ENCODE measurements at regions of chr18 and their contacts with region 1.

Region 1: DNA sequence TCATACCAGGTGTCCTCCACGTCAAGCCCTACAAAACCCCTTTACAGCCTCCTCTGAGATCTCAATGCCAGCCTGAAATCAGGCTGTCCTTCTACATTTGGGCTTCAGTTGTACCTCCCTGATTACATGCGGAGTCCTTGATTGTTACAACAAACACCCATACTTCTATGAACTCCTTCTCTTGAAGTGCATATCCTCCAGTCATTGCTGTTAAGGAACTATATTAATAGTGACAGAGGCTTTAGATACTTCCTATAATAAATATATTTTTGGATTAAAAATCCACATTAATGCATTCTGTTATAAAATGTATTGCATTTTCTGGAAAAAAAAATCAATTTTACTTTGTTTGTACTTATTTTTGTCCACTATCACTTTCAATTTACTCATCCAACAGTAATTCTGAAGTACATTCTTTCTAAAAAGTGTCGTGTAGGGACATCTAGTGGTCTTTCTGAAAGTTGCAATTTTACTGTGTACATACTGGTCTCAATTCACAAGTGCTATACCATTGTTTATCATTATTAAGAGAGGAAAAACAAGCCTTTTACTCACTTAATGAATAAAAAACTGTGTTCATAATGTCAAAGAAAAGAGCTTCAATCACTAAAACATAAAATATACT is 316.4 kb downstream of the DSEL start:
- DNase-seq: no peak
- H3K4me3 Mint-ChIP-seq: no peak overlapping the region
- H3K27ac Mint-ChIP-seq: no peak overlapping the region
- H3K4me1 Mint-ChIP-seq: no peaks in the 10 kb centered on the region
- H3K27me3 Mint-ChIP-seq: peaks cover 2% of the 10 kb centered on the region

Region 2: DNA sequence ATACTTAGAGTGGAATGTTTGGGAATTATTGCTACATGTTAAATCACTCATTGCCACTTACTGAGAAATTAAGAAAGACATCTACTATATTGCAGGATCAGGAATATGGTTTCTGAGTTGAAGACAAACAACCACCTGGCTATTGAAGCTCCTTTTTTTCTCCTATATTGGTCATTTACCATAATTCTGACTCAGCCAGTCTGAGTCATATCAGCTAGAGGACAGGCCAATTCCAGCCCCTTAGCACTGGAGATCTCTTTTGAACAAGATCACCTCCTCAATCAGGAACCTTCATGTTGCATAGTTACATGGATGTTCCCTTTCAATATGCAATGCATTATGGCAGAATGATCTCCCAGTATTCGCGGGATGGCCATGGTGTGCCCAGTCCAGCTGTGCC is 553.5 kb before region 1 on chr18:
- CTCF ChIA-PET with region 1: no interaction called
- POLR2A ChIA-PET with region 1: no interaction called
- intact Hi-C with region 1: no loop called
- DNase-seq: no peak
- H3K4me3 Mint-ChIP-seq: no peak overlapping the region
- H3K27ac Mint-ChIP-seq: no peak overlapping the region
- H3K4me1 Mint-ChIP-seq: no peaks in the 10 kb centered on the region
- H3K27me3 Mint-ChIP-seq: no peaks in the 10 kb centered on the region

Region 3: GRCh38 chr18:67104700-67105284 is 95.3 kb before region 1 on chr18:
- CTCF ChIA-PET with region 1: interaction called, 30 read pairs
- POLR2A ChIA-PET with region 1: no interaction called
- intact Hi-C with region 1: loop called (anchors 1 kb)
- DNase-seq: peak; percentile 58
- H3K4me3 Mint-ChIP-seq: no peak overlapping the region
- H3K27ac Mint-ChIP-seq: no peak overlapping the region
- H3K4me1 Mint-ChIP-seq: no peaks in the 10 kb centered on the region
- H3K27me3 Mint-ChIP-seq: no peaks in the 10 kb centered on the region

Measured in activated CD4-positive, alpha-beta memory T cell treated with anti-CD3 and anti-CD28 coated beads for 36 hours (primary cell).